Mammary epithelial cell (primary cell): ENCODE measurements at regions of chr6 and their contacts with region 1.

Region 1: DNA sequence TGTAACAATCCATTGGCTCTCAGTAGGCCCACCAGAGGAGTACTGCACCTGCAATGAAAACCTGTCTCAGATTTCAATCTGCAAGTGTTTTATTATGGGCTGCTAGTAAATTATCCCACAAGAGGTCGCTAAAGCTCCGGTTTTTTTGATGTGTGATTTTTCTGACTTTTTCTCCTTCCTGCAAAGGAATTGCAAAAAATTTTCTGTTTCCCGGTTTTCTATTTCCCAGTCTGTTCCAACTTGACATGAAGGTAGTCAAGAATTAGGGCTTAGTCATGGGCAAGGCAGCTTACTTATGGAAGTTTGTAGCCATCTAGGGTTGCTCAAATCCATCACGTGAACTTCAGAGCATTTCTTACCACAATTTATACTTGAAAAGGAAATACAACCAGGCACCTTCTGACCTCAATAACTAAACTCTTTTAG is 38.5 kb upstream of the AHI1 start:
- DNase-seq: peak; percentile 67
- H3K4me3 ChIP-seq: no peak overlapping the region
- H3K27ac ChIP-seq: no peak overlapping the region
- H3K4me1 ChIP-seq: peaks cover 14% of the 10 kb centered on the region
- H3K27me3 ChIP-seq: peaks cover 8% of the 10 kb centered on the region
- CTCF ChIP-seq: peak; percentile 60 to 71

Region 2: DNA sequence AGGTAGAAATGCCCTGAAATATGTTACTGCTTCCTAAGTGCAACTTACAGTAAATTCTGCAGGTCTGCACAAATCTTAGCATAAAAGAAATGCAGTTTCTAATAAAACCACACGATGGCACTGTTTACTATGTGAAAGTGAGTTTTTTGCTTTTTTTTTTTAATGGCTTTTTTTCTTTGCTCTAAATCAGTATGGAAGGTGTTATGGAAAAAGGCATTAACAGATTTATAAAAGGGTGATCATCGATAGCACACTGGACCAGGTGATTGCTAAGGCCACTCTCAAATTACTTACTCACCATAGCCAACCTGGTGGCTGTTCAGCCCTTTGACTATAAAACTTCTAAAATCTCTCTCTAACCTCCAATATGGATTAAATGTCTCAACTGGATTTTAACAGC is 84.3 kb before region 1 on chr6:
- CTCF ChIA-PET with region 1: interaction called, 4 read pairs
- dilution Hi-C with region 1: no loop called
- in situ Hi-C with region 1: no loop called
- intact Hi-C with region 1: loop called (anchors 5 kb)
- DNase-seq: peak; percentile 10
- H3K4me3 ChIP-seq: no peak overlapping the region
- H3K27ac ChIP-seq: no peak overlapping the region
- H3K4me1 ChIP-seq: no peaks in the 10 kb centered on the region
- H3K27me3 ChIP-seq: no peaks in the 10 kb centered on the region
- CTCF ChIP-seq: peak; percentile 60 to 62

Region 3: GRCh38 chr6:135497412-135498269 is 38.4 kb before region 1 on chr6 and contains the start of gene AHI1:
- CTCF ChIA-PET with region 1: no interaction called
- dilution Hi-C with region 1: no loop called
- in situ Hi-C with region 1: no loop called
- intact Hi-C with region 1: loop called (anchors 5 kb)
- DNase-seq: peak; percentile 88
- H3K4me3 ChIP-seq: peak within 1 kb of the TSS; percentile 79 to 99 (median 99)
- H3K27ac ChIP-seq: peak within 1 kb of the TSS; percentile 99
- H3K4me1 ChIP-seq: peaks cover 10% of the 10 kb centered on the region
- H3K27me3 ChIP-seq: no peaks in the 10 kb centered on the region
- CTCF ChIP-seq: no peak
- total RNA-seq, gene AHI1: 7.7 to 13.2 TPM

Region 4: GRCh38 chr6:135782546-135782945 is 246.5 kb after region 1 on chr6:
- CTCF ChIA-PET with region 1: no interaction called
- dilution Hi-C with region 1: no loop called
- in situ Hi-C with region 1: no loop called
- intact Hi-C with region 1: no loop called
- DNase-seq: no peak
- H3K4me3 ChIP-seq: no peak overlapping the region
- H3K27ac ChIP-seq: no peak overlapping the region
- H3K4me1 ChIP-seq: no peaks in the 10 kb centered on the region
- H3K27me3 ChIP-seq: peaks cover 2% of the 10 kb centered on the region
- CTCF ChIP-seq: no peak

Region 5: GRCh38 chr6:135909737-135910387 is 373.9 kb after region 1 on chr6:
- CTCF ChIA-PET with region 1: interaction called, 6 read pairs
- dilution Hi-C with region 1: no loop called
- in situ Hi-C with region 1: loop called in 1 of 2 experiments (anchors 25 kb)
- intact Hi-C with region 1: loop called (anchors 1 kb)
- DNase-seq: peak; percentile 54
- H3K4me3 ChIP-seq: no peak overlapping the region
- H3K27ac ChIP-seq: no peak overlapping the region
- H3K4me1 ChIP-seq: peaks cover 6% of the 10 kb centered on the region
- H3K27me3 ChIP-seq: no peaks in the 10 kb centered on the region
- CTCF ChIP-seq: peak; percentile 69 to 80

Region 6: GRCh38 chr6:135938576-135939207 is 402.7 kb after region 1 on chr6:
- CTCF ChIA-PET with region 1: no interaction called
- dilution Hi-C with region 1: no loop called
- in situ Hi-C with region 1: no loop called
- intact Hi-C with region 1: loop called (anchors 2 kb)
- DNase-seq: no peak
- H3K4me3 ChIP-seq: no peak overlapping the region
- H3K27ac ChIP-seq: no peak overlapping the region
- H3K4me1 ChIP-seq: peaks cover 14% of the 10 kb centered on the region
- H3K27me3 ChIP-seq: no peaks in the 10 kb centered on the region
- CTCF ChIP-seq: peak; percentile 30 to 51

Region 7: DNA sequence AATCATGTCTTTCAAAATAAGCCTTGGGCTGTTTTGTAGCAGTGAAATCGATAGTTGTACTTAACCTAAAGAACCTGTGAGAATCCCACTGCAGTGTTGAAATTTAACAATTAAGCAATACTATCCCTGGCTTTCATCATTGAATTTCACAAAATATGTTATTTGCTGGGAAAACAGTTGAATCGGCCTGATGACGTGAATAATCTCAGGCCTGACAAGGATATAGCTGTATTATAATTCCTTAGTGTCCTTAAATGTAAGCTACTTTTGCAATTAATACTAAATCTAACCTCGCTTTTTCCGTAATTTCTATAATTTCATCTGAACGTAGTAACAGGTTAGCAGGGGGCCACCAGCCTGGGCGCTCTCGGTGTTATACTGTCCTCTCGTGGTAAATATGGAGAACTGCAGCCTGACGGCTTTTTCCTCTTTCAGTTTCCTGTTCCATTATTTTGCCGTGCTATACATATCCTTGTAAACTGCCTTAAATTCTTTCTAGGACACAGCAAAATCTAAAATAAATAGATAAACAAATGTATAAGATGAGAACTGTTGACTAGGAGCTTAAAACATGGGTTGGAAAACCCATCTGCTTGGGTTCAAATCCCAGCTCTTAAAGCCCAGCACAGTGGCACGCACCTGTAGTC is 690.1 kb after region 1 on chr6:
- CTCF ChIA-PET with region 1: interaction called, 8 read pairs
- dilution Hi-C with region 1: no loop called
- in situ Hi-C with region 1: loop called (anchors 10 to 25 kb)
- intact Hi-C with region 1: loop called (anchors 1 kb)
- DNase-seq: no peak
- H3K4me3 ChIP-seq: no peak overlapping the region
- H3K27ac ChIP-seq: no peak overlapping the region
- H3K4me1 ChIP-seq: no peaks in the 10 kb centered on the region
- H3K27me3 ChIP-seq: no peaks in the 10 kb centered on the region
- CTCF ChIP-seq: peak; percentile 100

Region 8: DNA sequence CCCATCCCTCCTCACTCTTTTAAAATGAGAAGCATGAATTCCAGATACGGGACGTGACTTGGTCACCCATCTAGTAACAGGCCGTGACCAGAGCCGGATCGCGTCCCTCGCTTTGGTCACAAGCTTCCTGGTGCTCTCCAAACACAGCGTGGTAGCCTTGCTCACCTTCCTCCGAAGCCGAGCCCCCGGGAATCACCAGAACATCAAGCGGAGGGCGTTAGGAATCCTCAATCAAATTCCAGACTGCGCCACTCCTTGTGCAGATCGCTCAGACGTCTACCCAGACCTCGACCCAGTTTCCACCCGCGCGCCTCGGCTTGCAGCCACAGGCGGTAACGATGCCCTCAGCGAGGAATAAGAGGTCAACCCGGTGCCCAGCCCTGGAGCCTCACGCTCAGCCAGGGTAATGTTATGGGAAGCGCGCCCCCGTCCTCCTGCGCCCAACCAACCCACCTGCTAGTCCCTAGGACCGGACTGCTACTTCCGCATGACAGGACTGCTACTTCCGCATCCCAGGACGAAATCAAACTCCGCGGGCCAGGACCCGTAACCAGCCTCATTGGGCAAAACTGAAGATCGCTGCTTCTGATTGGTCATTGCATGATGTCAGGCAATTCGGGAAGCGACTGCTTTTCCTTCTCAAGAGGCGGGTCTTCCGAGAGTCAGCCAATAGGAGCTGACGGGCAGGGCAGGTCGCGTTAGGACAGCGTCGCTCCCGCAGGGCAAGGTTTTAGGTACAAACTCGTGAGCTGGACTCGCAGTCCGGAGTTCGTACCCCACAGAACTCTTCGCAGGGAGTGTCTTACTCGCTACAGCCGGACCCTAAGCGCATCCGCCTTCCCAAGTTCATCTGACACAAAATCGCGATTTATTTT is 714.0 kb after region 1 on chr6 and contains the start of gene MTFR2:
- CTCF ChIA-PET with region 1: no interaction called
- dilution Hi-C with region 1: no loop called
- in situ Hi-C with region 1: loop called in 1 of 2 experiments (anchors 25 kb)
- intact Hi-C with region 1: no loop called
- DNase-seq: peak; percentile 99
- H3K4me3 ChIP-seq: peak within 1 kb of the TSS; percentile 78 to 98 (median 90)
- H3K27ac ChIP-seq: peak within 1 kb of the TSS; percentile 76
- H3K4me1 ChIP-seq: peaks cover 6% of the 10 kb centered on the region
- H3K27me3 ChIP-seq: no peaks in the 10 kb centered on the region
- CTCF ChIP-seq: no peak
- total RNA-seq, gene MTFR2: 2.0 to 7.3 TPM